PC-3 (cell line): ENCODE measurements at regions of chr6 and their contacts with region 1.

Region 1: DNA sequence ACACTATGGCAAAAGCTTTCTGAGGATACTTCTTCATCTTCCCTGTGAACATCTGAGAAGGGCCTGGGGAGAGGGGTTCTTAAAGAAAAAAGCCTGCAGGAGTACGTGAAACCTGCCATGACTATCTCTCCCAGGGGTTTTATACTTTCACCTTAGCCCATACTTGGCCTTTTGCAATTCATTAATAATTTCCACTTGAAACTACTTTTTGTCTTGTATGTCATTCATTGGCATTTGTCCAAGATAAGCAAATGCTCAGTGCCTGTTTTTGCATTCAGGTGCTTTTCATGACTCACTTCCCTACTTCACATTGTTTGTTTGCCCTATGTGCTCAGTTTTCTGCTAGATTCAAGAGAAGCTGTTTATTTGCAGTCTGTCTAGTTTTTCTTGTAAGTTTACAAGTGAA is 580.2 kb upstream of the GJE1 start:
- DNase-seq: peak; percentile 93
- ATAC-seq: peak; percentile 93
- H3K4me3 ChIP-seq: peak overlapping the region; percentile 23; the same call in 1 of the 2 replicates
- H3K27ac ChIP-seq: peak overlapping the region; percentile 96
- H3K4me1 ChIP-seq: peaks cover 33% of the 10 kb centered on the region
- H3K27me3 ChIP-seq: no peaks in the 10 kb centered on the region
- CTCF ChIP-seq: no peak

Region 2: GRCh38 chr6:141153563-141153962 is 398.9 kb before region 1 on chr6:
- CTCF ChIA-PET with region 1: no interaction called
- POLR2A ChIA-PET with region 1: no interaction called
- intact Hi-C with region 1: loop called (anchors 10 kb)
- DNase-seq: no peak
- ATAC-seq: no peak
- H3K4me3 ChIP-seq: no peak overlapping the region
- H3K27ac ChIP-seq: no peak overlapping the region
- H3K4me1 ChIP-seq: no peaks in the 10 kb centered on the region
- H3K27me3 ChIP-seq: no peaks in the 10 kb centered on the region
- CTCF ChIP-seq: no peak

Region 3: GRCh38 chr6:141326426-141326825 is 226.1 kb before region 1 on chr6:
- CTCF ChIA-PET with region 1: no interaction called
- POLR2A ChIA-PET with region 1: no interaction called
- intact Hi-C with region 1: loop called (anchors 2 kb)
- DNase-seq: peak; percentile 95
- ATAC-seq: peak; percentile 96
- H3K4me3 ChIP-seq: peak overlapping the region; percentile 39; the same call in 1 of the 2 replicates
- H3K27ac ChIP-seq: peak overlapping the region; percentile 92
- H3K4me1 ChIP-seq: peaks cover 12% of the 10 kb centered on the region; the same call in 1 of the 2 replicates
- H3K27me3 ChIP-seq: no peaks in the 10 kb centered on the region
- CTCF ChIP-seq: no peak

Region 4: GRCh38 chr6:141421376-141421775 is 131.1 kb before region 1 on chr6:
- CTCF ChIA-PET with region 1: no interaction called
- POLR2A ChIA-PET with region 1: no interaction called
- intact Hi-C with region 1: loop called (anchors 1 kb)
- DNase-seq: peak; percentile 82
- ATAC-seq: peak; percentile 99
- H3K4me3 ChIP-seq: peak overlapping the region; percentile 27; the same call in 1 of the 2 replicates
- H3K27ac ChIP-seq: peak overlapping the region; percentile 67; the same call in 1 of the 2 replicates
- H3K4me1 ChIP-seq: peaks cover 16% of the 10 kb centered on the region
- H3K27me3 ChIP-seq: no peaks in the 10 kb centered on the region
- CTCF ChIP-seq: no peak

Region 5: GRCh38 chr6:141460743-141461484 is 91.6 kb before region 1 on chr6:
- CTCF ChIA-PET with region 1: no interaction called
- POLR2A ChIA-PET with region 1: no interaction called
- intact Hi-C with region 1: loop called (anchors 2 kb)
- DNase-seq: peak; percentile 61
- ATAC-seq: peak; percentile 88
- H3K4me3 ChIP-seq: no peak overlapping the region
- H3K27ac ChIP-seq: peak overlapping the region; percentile 61
- H3K4me1 ChIP-seq: peaks cover 40% of the 10 kb centered on the region
- H3K27me3 ChIP-seq: no peaks in the 10 kb centered on the region
- CTCF ChIP-seq: no peak

Region 6: DNA sequence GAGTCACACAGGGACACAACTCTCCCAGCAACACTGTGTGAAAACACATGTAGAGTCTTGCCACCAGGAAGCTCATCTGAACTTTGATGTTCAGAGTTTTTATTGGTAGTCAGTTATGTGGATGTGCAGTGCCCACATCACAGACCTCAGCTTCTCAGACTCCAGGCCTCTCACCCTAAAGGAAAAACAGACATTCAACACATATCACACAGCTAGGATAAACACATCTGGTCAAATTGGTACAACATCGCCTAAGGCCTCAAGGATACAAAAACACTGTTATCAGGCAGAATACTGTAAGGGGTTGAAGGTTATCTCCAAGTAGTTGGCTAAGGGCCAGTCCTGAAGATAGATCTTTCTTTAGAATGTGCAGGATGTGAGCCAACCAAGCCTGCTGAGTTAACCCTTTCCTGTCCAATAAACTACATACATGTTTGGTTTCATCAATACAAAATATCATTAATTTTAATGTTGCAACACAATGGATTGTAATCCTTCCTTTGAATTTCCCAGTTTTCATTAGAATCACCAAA is 271.8 kb after region 1 on chr6:
- CTCF ChIA-PET with region 1: no interaction called
- POLR2A ChIA-PET with region 1: no interaction called
- intact Hi-C with region 1: no loop called
- DNase-seq: no peak
- ATAC-seq: no peak
- H3K4me3 ChIP-seq: no peak overlapping the region
- H3K27ac ChIP-seq: no peak overlapping the region
- H3K4me1 ChIP-seq: no peaks in the 10 kb centered on the region
- H3K27me3 ChIP-seq: no peaks in the 10 kb centered on the region
- CTCF ChIP-seq: no peak